Endothelial cell of umbilical vein (primary cell): ENCODE measurements at regions of chr15 and their contacts with region 1.

Region 1: GRCh38 chr15:39171944-39172368 is 408.9 kb upstream of the THBS1 start:
- DNase-seq: peak; percentile 99
- H3K4me3 ChIP-seq: no peak overlapping the region
- H3K27ac ChIP-seq: peak overlapping the region; percentile 87
- H3K4me1 ChIP-seq: peaks cover 17% of the 10 kb centered on the region
- H3K27me3 ChIP-seq: no peaks in the 10 kb centered on the region
- CTCF ChIP-seq: peak; percentile 41 to 62
- POLR2A ChIP-seq: peak; percentile 30

Region 2: DNA sequence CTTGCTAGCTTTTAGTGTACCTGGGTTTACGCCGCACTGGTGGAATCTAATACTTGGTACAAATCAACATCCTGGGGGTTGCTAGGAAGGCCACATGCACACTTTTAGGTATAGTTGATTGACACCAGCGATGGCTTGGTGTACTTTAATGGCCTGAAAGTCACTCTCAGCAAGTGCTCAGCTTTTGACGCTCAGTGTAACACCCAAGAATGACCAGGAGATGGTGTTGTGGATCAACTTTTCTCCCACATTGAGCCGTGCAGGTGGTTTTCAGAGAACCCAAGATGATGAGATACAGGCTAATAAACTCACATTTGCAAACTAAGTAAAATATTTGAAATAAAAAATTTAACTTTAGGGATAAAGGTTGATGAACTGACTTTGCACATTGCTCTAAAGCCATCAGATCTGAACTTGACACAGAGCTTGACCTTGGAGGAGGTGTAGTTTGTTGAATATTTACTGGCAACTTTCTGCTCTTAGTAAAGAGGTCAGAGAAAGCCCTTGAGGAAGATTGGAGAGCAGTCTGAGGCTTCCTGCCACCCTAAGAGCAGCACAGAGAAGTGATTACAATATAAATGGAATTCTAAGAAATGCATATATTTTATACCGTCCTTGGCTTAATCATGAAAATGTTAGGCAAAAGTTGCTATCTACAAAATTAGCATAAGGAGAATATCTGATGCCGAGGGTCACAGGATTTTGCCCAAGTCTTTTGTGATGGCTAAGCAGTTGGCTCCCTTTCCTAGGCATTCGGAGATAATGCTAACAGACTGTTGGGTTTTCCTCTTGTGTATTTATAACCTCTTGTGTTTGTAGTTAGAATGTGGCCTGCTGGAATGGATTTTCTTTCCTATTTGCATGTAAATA is 463.9 kb before region 1 on chr15:
- CTCF ChIA-PET with region 1: interaction called, 13 read pairs
- POLR2A ChIA-PET with region 1: no interaction called
- dilution Hi-C with region 1: no loop called
- intact Hi-C with region 1: loop called (anchors 1 kb)
- DNase-seq: peak; percentile 87
- H3K4me3 ChIP-seq: no peak overlapping the region
- H3K27ac ChIP-seq: no peak overlapping the region
- H3K4me1 ChIP-seq: peaks cover 10% of the 10 kb centered on the region
- H3K27me3 ChIP-seq: no peaks in the 10 kb centered on the region
- CTCF ChIP-seq: peak; percentile 71 to 78
- POLR2A ChIP-seq: no peak

Region 3: GRCh38 chr15:39059917-39060316 is 112.0 kb before region 1 on chr15:
- CTCF ChIA-PET with region 1: no interaction called
- POLR2A ChIA-PET with region 1: no interaction called
- dilution Hi-C with region 1: no loop called
- intact Hi-C with region 1: no loop called
- DNase-seq: no peak
- H3K4me3 ChIP-seq: no peak overlapping the region
- H3K27ac ChIP-seq: no peak overlapping the region
- H3K4me1 ChIP-seq: peaks cover 13% of the 10 kb centered on the region
- H3K27me3 ChIP-seq: no peaks in the 10 kb centered on the region
- CTCF ChIP-seq: no peak
- POLR2A ChIP-seq: no peak

Region 4: GRCh38 chr15:39100106-39100660 is 71.8 kb before region 1 on chr15:
- CTCF ChIA-PET with region 1: no interaction called
- POLR2A ChIA-PET with region 1: no interaction called
- dilution Hi-C with region 1: no loop called
- intact Hi-C with region 1: no loop called
- DNase-seq: no peak
- H3K4me3 ChIP-seq: no peak overlapping the region
- H3K27ac ChIP-seq: no peak overlapping the region
- H3K4me1 ChIP-seq: peaks cover 28% of the 10 kb centered on the region
- H3K27me3 ChIP-seq: no peaks in the 10 kb centered on the region
- CTCF ChIP-seq: no peak
- POLR2A ChIP-seq: no peak

Region 5: DNA sequence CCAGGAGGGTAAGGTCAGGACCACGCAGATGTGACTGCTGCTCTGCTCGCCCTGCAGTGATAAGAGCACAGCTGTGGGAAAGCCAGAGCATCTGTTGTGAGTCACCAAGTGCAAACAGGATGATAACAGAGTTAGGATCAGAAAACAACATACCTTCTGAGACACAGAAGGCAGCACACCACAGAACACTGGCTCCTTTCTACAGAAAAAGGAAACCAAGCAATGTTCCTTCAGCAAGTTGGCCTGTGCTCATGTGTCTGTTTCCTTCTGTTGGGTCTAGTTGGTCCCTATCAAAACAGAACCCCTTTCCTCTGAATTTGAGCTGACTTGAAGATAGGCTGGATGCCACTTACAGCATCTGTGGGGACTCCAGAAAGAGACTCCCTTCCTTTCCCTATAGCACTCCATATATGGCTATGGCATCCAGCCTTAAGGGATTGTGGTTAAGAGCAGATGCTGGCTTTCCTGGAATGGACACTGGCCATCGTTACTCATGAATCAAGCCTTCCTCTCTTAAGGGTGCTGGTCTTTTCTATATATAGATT is 31.8 kb before region 1 on chr15:
- CTCF ChIA-PET with region 1: interaction called, 6 read pairs
- POLR2A ChIA-PET with region 1: interaction called, 3 read pairs
- dilution Hi-C with region 1: no loop called
- intact Hi-C with region 1: loop called (anchors 1 kb)
- DNase-seq: peak; percentile 100
- H3K4me3 ChIP-seq: no peak overlapping the region
- H3K27ac ChIP-seq: peak overlapping the region; percentile 96
- H3K4me1 ChIP-seq: peaks cover 34% of the 10 kb centered on the region
- H3K27me3 ChIP-seq: no peaks in the 10 kb centered on the region
- CTCF ChIP-seq: no peak
- POLR2A ChIP-seq: peak; percentile 90

Region 6: GRCh38 chr15:39248204-39248603 is 76.2 kb after region 1 on chr15:
- CTCF ChIA-PET with region 1: interaction called, 31 read pairs
- POLR2A ChIA-PET with region 1: interaction called, 5 read pairs
- dilution Hi-C with region 1: no loop called
- intact Hi-C with region 1: loop called (anchors 1 kb)
- DNase-seq: peak; percentile 99
- H3K4me3 ChIP-seq: peak overlapping the region in 1 of 3 experiments; percentile 0
- H3K27ac ChIP-seq: peak overlapping the region; percentile 98
- H3K4me1 ChIP-seq: peaks cover 72% of the 10 kb centered on the region
- H3K27me3 ChIP-seq: no peaks in the 10 kb centered on the region
- CTCF ChIP-seq: no peak
- POLR2A ChIP-seq: no peak

Region 7: GRCh38 chr15:39301589-39301999 is 129.6 kb after region 1 on chr15:
- CTCF ChIA-PET with region 1: no interaction called
- POLR2A ChIA-PET with region 1: no interaction called
- dilution Hi-C with region 1: no loop called
- intact Hi-C with region 1: loop called (anchors 5 kb)
- DNase-seq: peak; percentile 37
- H3K4me3 ChIP-seq: no peak overlapping the region
- H3K27ac ChIP-seq: peak overlapping the region; percentile 92
- H3K4me1 ChIP-seq: peaks cover 31% of the 10 kb centered on the region
- H3K27me3 ChIP-seq: no peaks in the 10 kb centered on the region
- CTCF ChIP-seq: no peak
- POLR2A ChIP-seq: no peak

Region 8: GRCh38 chr15:39472621-39473297 is 300.8 kb after region 1 on chr15:
- CTCF ChIA-PET with region 1: no interaction called
- POLR2A ChIA-PET with region 1: no interaction called
- dilution Hi-C with region 1: no loop called
- intact Hi-C with region 1: loop called (anchors 5 kb)
- DNase-seq: no peak
- H3K4me3 ChIP-seq: no peak overlapping the region
- H3K27ac ChIP-seq: no peak overlapping the region
- H3K4me1 ChIP-seq: peaks cover 26% of the 10 kb centered on the region
- H3K27me3 ChIP-seq: no peaks in the 10 kb centered on the region
- CTCF ChIP-seq: no peak
- POLR2A ChIP-seq: no peak

Region 9: GRCh38 chr15:39686000-39686613 is 514.2 kb after region 1 on chr15:
- CTCF ChIA-PET with region 1: no interaction called
- POLR2A ChIA-PET with region 1: no interaction called
- dilution Hi-C with region 1: no loop called
- intact Hi-C with region 1: loop called (anchors 1 kb)
- DNase-seq: peak; percentile 66
- H3K4me3 ChIP-seq: no peak overlapping the region
- H3K27ac ChIP-seq: no peak overlapping the region
- H3K4me1 ChIP-seq: no peaks in the 10 kb centered on the region
- H3K27me3 ChIP-seq: no peaks in the 10 kb centered on the region
- CTCF ChIP-seq: peak; percentile 61 to 64
- POLR2A ChIP-seq: no peak